ENCODE measurements at regions of chr1 and their contacts with region 1.

Region 1: DNA sequence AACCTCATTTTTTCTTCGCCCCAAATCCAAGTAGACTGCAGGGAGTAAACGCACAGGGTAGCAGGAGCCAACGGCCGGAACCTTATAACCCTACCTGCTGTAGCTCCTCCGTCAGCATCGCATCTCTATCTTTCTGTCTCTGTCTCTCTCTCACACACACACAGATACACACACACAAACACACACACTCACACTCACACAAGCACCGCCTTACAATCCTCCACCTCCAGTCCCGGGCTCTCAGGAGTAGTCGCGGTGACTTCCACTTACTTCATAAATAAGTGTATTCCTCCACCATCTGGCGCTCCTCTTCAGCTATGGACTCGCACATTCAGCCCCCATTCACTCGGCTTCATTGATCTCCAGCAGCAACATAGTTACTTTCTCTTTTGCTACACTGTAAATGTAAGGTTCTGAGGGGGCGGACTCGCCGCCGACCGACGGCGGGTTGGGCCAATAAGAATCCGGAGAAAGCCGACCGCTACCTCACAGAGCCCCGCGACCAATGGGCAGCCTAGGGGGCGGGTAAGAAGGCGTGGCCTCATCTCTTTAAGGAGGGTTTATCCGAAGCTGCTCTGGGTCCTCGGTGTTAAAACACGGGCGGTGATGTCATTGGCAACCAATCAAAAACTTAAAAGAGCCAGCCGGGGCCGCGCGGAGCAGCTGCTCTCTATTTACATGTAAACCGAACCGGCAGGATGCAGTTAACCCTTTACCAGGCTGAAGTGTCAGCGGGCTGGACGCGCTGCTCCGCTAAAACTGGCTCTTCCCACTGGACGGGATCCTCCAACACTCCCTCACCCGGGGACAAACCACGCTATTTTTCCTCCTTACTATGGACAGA is at the start of gene DUSP10:
- DNase-seq: peak; percentile 94
- ATAC-seq: peak; percentile 81
- H3K4me3 Mint-ChIP-seq: no peak within 1 kb of the TSS
- H3K27ac Mint-ChIP-seq: peak within 1 kb of the TSS; percentile 65
- H3K4me1 Mint-ChIP-seq: peaks cover 20% of the 10 kb centered on the region
- H3K27me3 Mint-ChIP-seq: no peaks in the 10 kb centered on the region
- CTCF ChIP-seq: no peak
- total RNA-seq, gene DUSP10: 36.6 and 39.5 TPM in 2 replicates

Region 2: DNA sequence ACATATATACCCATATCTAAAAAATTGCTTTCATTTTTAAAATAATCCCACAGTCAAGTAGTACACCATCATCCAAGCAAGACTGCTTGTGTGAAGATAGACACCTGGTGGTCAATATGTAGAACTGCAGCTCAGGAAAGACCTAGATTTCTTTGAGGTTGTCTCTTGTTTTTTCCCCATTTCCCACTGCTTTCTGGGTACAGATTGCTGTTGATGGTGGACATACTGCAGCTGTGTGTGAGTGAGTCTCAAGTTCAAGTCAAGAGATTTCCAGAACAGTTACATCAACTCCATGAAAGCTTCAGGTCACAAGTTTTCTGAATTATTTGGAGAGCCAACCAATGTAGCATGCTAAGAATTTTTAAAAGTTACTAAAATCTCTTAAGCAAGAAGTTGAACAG is 306.4 kb before region 1 on chr1:
- CTCF ChIA-PET with region 1: interaction called, 3 read pairs
- POLR2A ChIA-PET with region 1: interaction called, 8 read pairs
- intact Hi-C with region 1: loop called (anchors 1 kb)
- DNase-seq: no peak
- ATAC-seq: peak; percentile 27
- H3K4me3 Mint-ChIP-seq: no peak overlapping the region
- H3K27ac Mint-ChIP-seq: no peak overlapping the region
- H3K4me1 Mint-ChIP-seq: peaks cover 26% of the 10 kb centered on the region
- H3K27me3 Mint-ChIP-seq: peaks cover 4% of the 10 kb centered on the region
- CTCF ChIP-seq: peak; percentile 29

Region 3: GRCh38 chr1:221725735-221726672 is 15.9 kb before region 1 on chr1:
- CTCF ChIA-PET with region 1: no interaction called
- POLR2A ChIA-PET with region 1: interaction called, 30 read pairs
- intact Hi-C with region 1: loop called (anchors 1 kb)
- DNase-seq: no peak
- ATAC-seq: peak; percentile 47
- H3K4me3 Mint-ChIP-seq: peak overlapping the region; percentile 42
- H3K27ac Mint-ChIP-seq: peak overlapping the region; percentile 47
- H3K4me1 Mint-ChIP-seq: peaks cover 67% of the 10 kb centered on the region
- H3K27me3 Mint-ChIP-seq: no peaks in the 10 kb centered on the region
- CTCF ChIP-seq: no peak

Region 4: GRCh38 chr1:221809031-221810029 is 67.4 kb after region 1 on chr1:
- CTCF ChIA-PET with region 1: interaction called, 5 read pairs
- POLR2A ChIA-PET with region 1: interaction called, 36 read pairs
- intact Hi-C with region 1: no loop called
- DNase-seq: no peak
- ATAC-seq: peak; percentile 73
- H3K4me3 Mint-ChIP-seq: peak overlapping the region; percentile 52
- H3K27ac Mint-ChIP-seq: peak overlapping the region; percentile 91
- H3K4me1 Mint-ChIP-seq: peaks cover 72% of the 10 kb centered on the region
- H3K27me3 Mint-ChIP-seq: no peaks in the 10 kb centered on the region
- CTCF ChIP-seq: no peak

Region 5: GRCh38 chr1:221878134-221878533 is 136.2 kb after region 1 on chr1:
- CTCF ChIA-PET with region 1: interaction called, 4 read pairs
- POLR2A ChIA-PET with region 1: interaction called, 29 read pairs
- intact Hi-C with region 1: loop called (anchors 1 kb)
- DNase-seq: no peak
- ATAC-seq: peak; percentile 36
- H3K4me3 Mint-ChIP-seq: no peak overlapping the region
- H3K27ac Mint-ChIP-seq: no peak overlapping the region
- H3K4me1 Mint-ChIP-seq: peaks cover 48% of the 10 kb centered on the region
- H3K27me3 Mint-ChIP-seq: no peaks in the 10 kb centered on the region
- CTCF ChIP-seq: no peak

Region 6: GRCh38 chr1:221907166-221907932 is 165.4 kb after region 1 on chr1:
- CTCF ChIA-PET with region 1: no interaction called
- POLR2A ChIA-PET with region 1: no interaction called
- intact Hi-C with region 1: no loop called
- DNase-seq: no peak
- ATAC-seq: no peak
- H3K4me3 Mint-ChIP-seq: no peak overlapping the region
- H3K27ac Mint-ChIP-seq: no peak overlapping the region
- H3K4me1 Mint-ChIP-seq: peaks cover 14% of the 10 kb centered on the region
- H3K27me3 Mint-ChIP-seq: no peaks in the 10 kb centered on the region
- CTCF ChIP-seq: no peak

Region 7: DNA sequence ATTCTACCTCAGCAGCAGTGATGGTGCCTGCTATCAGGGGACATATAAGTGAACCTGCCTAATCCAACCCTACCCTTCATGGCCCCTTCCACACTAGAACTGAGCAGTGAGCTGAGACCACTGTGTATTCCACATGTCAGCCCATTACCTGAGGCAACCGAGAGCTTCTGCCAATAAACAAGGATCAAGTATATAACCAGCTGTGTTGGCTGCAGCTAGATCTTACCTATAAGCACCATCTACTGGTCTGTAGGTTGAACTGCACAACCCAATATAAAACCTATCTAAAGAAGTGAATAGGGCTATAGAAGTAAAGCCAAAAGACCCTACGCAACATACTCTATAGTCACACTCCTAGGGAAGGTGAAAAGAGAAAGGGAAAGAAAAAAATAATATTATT is 429.1 kb after region 1 on chr1:
- CTCF ChIA-PET with region 1: interaction called, 5 read pairs
- POLR2A ChIA-PET with region 1: no interaction called
- intact Hi-C with region 1: loop called (anchors 1 kb)
- DNase-seq: no peak
- ATAC-seq: peak; percentile 52
- H3K4me3 Mint-ChIP-seq: no peak overlapping the region
- H3K27ac Mint-ChIP-seq: no peak overlapping the region
- H3K4me1 Mint-ChIP-seq: no peaks in the 10 kb centered on the region
- H3K27me3 Mint-ChIP-seq: peaks cover 16% of the 10 kb centered on the region
- CTCF ChIP-seq: no peak

Measured in activated B cell treated with CpG ODN at 0.5 μM for 24 hours (primary cell).